ENCODE measurements at regions of chr6 and their contacts with region 1.

Region 1: DNA sequence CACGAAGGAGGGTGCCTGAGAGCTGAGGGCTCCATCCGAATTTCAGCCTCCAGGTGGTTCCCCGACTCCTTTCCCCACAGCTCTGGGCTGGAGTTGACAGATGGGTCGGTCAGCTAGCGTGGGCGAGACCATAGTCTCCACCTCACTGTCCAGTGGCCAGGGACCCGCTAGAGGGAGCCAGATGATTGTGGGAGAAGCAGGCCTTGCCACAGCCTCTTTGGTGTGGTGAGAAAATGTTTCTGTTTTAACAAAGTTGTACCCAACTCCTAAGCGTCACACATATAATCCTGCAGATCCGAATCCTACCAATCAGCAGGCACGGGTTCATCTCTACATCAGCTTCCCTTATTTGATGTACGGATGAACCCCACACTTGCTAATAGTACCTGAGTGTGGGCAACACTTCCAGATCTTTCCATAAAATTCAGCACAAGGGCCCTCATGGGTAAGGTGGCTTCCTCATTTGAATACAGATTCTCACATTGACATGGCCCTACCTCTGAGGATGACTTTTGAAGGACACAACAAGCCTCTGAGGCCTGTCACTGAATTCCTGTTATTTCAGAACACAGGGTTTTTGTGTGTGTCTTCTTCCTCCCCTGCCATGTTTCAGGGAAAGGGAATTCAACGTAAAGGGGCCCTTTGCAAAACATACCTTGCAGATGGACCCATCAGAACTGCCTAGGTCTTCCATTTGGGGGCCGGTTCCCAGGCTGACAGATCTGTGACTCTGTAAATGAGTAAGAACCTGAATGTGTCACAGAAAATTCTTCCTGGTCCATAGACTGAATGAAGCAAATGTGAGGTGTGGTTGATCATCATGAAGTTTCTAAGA is 103.2 kb upstream of the DUSP22 start:
- DNase-seq: peak; percentile 95
- ATAC-seq: peak; percentile 86
- H3K4me3 Mint-ChIP-seq: peak overlapping the region; percentile 36
- H3K27ac Mint-ChIP-seq: peak overlapping the region; percentile 96
- H3K4me1 Mint-ChIP-seq: peaks cover 55% of the 10 kb centered on the region
- H3K27me3 Mint-ChIP-seq: no peaks in the 10 kb centered on the region

Region 2: GRCh38 chr6:203661-204060 is 14.6 kb after region 1 on chr6:
- CTCF ChIA-PET with region 1: interaction called, 14 read pairs
- DNase-seq: no peak
- ATAC-seq: no peak
- H3K4me3 Mint-ChIP-seq: no peak overlapping the region
- H3K27ac Mint-ChIP-seq: no peak overlapping the region
- H3K4me1 Mint-ChIP-seq: peaks cover 10% of the 10 kb centered on the region
- H3K27me3 Mint-ChIP-seq: peaks cover 15% of the 10 kb centered on the region

Region 3: DNA sequence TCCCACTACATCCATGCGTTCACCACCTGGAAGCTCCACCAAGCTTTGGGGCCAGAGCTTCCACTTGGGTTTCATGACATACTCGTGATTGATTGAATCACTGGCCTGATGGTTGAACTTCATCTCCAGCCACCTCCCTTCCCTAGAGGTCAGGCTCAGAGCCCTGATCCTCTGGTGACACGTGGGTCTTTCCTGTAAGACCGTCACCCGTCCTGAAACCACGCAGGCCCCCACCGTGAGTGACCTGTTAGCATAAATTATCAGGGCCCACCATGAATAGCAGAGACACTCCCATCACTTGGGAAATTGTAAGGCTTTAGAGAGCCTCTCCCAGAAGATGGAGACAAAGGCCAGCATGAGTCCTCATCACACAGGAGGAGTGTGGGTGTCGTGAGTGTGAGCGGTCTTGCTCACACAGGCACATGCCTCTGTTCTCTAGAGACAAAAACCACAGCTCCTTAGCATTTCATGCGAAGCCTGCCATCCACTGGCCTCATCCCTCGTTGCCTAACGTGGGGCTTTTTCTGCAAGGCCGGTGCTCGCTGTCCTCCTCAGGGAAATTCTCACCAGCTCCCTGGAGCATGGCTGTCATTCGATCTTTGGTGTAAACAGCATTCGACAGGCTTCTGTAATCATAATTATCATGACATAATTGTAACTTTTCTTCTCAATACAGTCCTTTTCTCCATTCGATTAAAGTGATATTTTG is 38.2 kb after region 1 on chr6:
- CTCF ChIA-PET with region 1: interaction called, 42 read pairs
- DNase-seq: no peak
- ATAC-seq: no peak
- H3K4me3 Mint-ChIP-seq: no peak overlapping the region
- H3K27ac Mint-ChIP-seq: peak overlapping the region; percentile 61
- H3K4me1 Mint-ChIP-seq: peaks cover 80% of the 10 kb centered on the region
- H3K27me3 Mint-ChIP-seq: no peaks in the 10 kb centered on the region

Region 4: GRCh38 chr6:313087-313486 is 124.0 kb after region 1 on chr6:
- CTCF ChIA-PET with region 1: interaction called, 14 read pairs
- DNase-seq: no peak
- ATAC-seq: peak; percentile 39
- H3K4me3 Mint-ChIP-seq: no peak overlapping the region
- H3K27ac Mint-ChIP-seq: no peak overlapping the region
- H3K4me1 Mint-ChIP-seq: peaks cover 27% of the 10 kb centered on the region
- H3K27me3 Mint-ChIP-seq: no peaks in the 10 kb centered on the region

Region 5: DNA sequence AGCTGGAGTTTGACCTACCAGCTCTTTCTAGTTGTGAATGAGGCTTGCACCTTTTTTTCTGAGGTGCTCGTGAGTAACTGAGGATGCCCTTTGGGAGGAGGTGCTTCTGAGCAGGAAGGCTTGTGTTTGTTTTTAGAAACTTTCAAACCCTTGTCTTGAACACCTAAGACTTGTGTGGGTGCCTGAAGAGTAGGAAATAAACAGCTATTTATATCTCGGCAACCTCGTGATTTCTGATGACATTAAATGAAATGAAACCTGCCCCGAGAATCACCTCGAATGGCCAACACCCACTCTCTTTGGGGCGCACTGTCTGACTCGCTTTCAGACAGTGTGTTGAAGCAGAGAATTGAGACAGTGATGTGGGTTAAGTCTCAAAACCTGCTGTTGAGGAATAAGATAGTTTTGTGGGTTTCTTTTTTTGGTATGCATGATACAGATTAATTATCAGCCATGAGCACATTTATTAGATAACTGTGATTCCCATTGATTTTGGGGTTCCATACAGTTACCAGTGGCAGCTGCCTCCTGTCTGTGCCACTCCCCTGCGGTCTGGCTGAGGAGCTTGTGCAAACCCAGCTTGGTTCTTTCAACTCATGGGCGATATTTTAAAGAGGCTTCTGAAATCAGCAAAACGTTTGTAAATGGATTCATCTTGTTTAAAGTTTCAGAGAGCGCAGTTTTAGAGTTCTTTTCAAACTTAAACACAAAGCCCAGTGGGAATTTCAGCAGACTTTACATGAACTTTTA is 210.9 kb after region 1 on chr6:
- CTCF ChIA-PET with region 1: interaction called, 50 read pairs
- DNase-seq: peak; percentile 66
- ATAC-seq: peak; percentile 46
- H3K4me3 Mint-ChIP-seq: peak overlapping the region; percentile 13
- H3K27ac Mint-ChIP-seq: peak overlapping the region; percentile 79
- H3K4me1 Mint-ChIP-seq: peaks cover 92% of the 10 kb centered on the region
- H3K27me3 Mint-ChIP-seq: no peaks in the 10 kb centered on the region